CD4-positive, alpha-beta T cell (primary cell): ENCODE measurements at regions of chr6 and their contacts with region 1.

Region 1: GRCh38 chr6:79233611-79234149 is 802 bp downstream of the HMGN3 start:
- DNase-seq: peak; percentile 19 to 78 (median 46)
- ATAC-seq: peak; percentile 28
- H3K4me3 ChIP-seq: peak overlapping the region; percentile 77
- H3K4me3 Mint-ChIP-seq: peak overlapping the region; percentile 99
- H3K27ac ChIP-seq: peak overlapping the region in 1 of 2 donors; percentile 14
- H3K27ac Mint-ChIP-seq: peak overlapping the region; percentile 86
- H3K4me1 ChIP-seq: peaks cover 4% of the 10 kb centered on the region
- H3K4me1 Mint-ChIP-seq: peaks cover 32% of the 10 kb centered on the region
- H3K27me3 ChIP-seq: no peaks in the 10 kb centered on the region
- H3K27me3 Mint-ChIP-seq: no peaks in the 10 kb centered on the region
- CTCF ChIP-seq: peak; percentile 19

Region 2: DNA sequence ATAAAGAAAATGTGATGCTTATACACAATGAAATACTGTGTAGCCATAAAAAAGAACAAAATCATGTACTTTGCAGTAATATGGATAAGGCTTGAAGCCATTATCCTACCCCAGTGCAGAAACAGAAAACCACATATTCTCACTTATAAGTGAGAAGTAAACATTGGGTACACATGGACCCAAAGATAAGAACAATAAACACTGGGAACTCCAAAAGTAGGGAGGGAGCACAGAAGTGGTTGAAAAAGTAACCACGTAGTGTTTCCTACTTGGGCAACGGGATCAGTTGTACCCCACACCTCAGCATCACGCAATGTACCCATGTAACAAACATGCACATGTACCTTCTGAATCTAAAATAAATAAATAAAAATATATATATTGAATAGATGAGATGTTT is 358.2 kb before region 1 on chr6:
- CTCF ChIA-PET with region 1: no interaction called
- POLR2A ChIA-PET with region 1: no interaction called
- intact Hi-C with region 1: loop called in 1 of 2 experiments (anchors 10 kb)
- DNase-seq: no peak
- ATAC-seq: no peak
- H3K4me3 ChIP-seq: no peak overlapping the region
- H3K4me3 Mint-ChIP-seq: no peak overlapping the region
- H3K27ac ChIP-seq: no peak overlapping the region
- H3K27ac Mint-ChIP-seq: no peak overlapping the region
- H3K4me1 ChIP-seq: no peaks in the 10 kb centered on the region
- H3K4me1 Mint-ChIP-seq: no peaks in the 10 kb centered on the region
- H3K27me3 ChIP-seq: no peaks in the 10 kb centered on the region
- H3K27me3 Mint-ChIP-seq: no peaks in the 10 kb centered on the region
- CTCF ChIP-seq: no peak

Region 3: DNA sequence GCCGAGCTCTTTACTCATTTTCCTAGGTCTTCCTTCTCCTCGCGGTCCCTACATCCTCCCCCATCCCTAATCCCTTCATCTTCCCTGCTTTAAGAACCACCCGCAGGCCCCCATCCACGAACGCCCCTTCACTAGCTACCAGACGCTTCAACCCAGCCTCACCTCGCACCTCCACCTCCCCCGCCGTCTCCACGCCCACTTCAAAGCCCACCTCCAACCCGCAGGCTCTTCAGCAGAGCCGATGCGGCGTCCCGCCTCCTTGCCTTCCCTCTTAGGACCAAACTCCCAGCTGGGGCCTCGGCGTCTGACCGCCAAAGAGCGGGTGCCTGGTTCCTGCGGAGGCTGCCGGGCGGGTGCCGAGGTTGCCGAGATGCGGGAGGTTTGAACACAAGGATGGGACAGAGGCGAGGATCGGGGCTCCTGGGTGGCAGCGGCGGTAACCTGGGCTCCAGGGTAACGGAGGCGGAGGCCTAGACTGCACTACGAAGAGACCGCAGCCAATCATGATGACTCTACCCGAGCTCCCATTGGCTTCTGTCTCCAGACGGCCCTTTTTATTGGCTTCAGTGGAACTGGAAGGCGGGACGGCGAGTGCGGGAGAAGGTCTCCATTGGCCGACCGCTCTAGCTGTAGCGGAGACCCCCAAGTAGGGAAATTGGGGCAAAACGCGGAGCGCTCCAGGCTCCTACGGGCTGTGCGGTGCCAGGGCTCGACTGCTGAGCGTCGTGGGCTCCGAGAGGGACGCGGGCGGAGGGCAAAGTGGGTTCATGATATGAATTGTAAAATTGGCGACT is 303.5 kb after region 1 on chr6 and contains the start of gene LCA5:
- CTCF ChIA-PET with region 1: no interaction called
- POLR2A ChIA-PET with region 1: no interaction called
- intact Hi-C with region 1: loop called in 1 of 2 experiments (anchors 5 kb)
- DNase-seq: peak; percentile 60 to 91 (median 76)
- ATAC-seq: peak; percentile 96
- H3K4me3 ChIP-seq: peak within 1 kb of the TSS; percentile 74
- H3K4me3 Mint-ChIP-seq: no peak within 1 kb of the TSS
- H3K27ac ChIP-seq: no peak within 1 kb of the TSS
- H3K27ac Mint-ChIP-seq: no peak within 1 kb of the TSS
- H3K4me1 ChIP-seq: peaks cover 16% of the 10 kb centered on the region
- H3K4me1 Mint-ChIP-seq: no peaks in the 10 kb centered on the region
- H3K27me3 ChIP-seq: peaks cover 0 to 17% of the 10 kb centered on the region in 2 experiments
- H3K27me3 Mint-ChIP-seq: peaks cover 10% of the 10 kb centered on the region
- CTCF ChIP-seq: no peak
- total RNA-seq, gene LCA5: not detected